Vagina (tissue), 2 donors: ENCODE measurements at regions of chr5 and their contacts with region 1.

Region 1: GRCh38 chr5:134527146-134527960 is 1.9 kb downstream of the JADE2 start:
- DNase-seq: peak in 1 of 2 donors; percentile 97
- H3K4me3 ChIP-seq: peak overlapping the region; percentile 77 to 82
- H3K27ac ChIP-seq: peak overlapping the region; percentile 96
- H3K4me1 ChIP-seq: peaks cover 59% of the 10 kb centered on the region
- H3K27me3 ChIP-seq: no peaks in the 10 kb centered on the region
- CTCF ChIP-seq: peak; percentile 68 to 81 (median 77)
- POLR2A ChIP-seq: peak in 1 of 2 donors; percentile 65

Region 2: DNA sequence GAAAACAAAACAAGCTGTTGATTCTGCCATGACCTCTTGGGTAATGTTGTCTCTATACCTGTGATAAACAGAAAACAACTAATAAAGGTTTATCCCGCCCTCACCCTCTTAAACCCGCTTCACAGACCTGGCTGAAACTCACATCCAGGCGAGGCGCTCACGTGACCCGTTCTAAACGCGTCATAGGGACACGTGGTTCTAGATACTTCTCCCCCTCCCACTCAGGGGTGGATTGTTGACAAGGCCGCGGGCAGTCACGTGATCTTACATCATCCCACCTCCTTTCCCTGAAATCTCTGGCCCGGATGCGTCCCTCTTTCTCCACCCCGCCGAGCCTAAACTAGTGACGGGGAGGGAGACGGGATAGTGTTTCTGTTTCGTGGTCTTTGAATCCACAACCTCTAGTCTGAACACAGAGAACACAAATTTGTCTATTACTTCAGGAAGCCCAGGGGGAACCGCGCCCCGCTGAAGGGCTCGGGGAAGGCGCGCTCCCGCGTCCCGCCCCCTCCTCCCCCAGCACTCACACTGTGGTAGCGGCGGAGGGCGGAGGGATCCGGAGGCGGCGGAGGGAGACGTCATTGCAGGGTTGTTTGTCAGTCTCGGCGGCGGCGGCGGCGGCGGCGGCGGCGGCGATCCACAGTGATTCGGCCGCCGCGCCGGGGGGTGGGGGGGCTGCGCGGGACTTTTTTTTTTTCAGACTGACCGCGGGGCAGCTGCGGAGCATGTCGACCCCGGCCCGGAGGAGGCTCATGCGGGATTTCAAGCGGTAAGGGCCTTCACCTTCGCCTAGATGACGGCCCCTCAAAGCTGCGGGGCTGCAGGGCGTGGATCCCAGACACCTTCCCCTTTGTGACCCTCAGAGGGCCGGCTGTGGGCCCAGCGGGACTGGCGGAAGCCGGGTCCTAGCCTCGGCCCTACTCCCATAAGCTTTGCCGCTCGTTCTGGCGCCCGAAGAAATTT is 156.2 kb before region 1 on chr5 and contains the start of gene UBE2B:
- intact Hi-C with region 1: loop called (anchors 1 kb)
- DNase-seq: peak; percentile 99 to 100
- H3K4me3 ChIP-seq: peak within 1 kb of the TSS; percentile 76 to 81
- H3K27ac ChIP-seq: peak within 1 kb of the TSS; percentile 99
- H3K4me1 ChIP-seq: peaks cover 38% of the 10 kb centered on the region
- H3K27me3 ChIP-seq: no peaks in the 10 kb centered on the region
- CTCF ChIP-seq: peak in 1 of 3 experiments; percentile 17
- POLR2A ChIP-seq: peak in 1 of 2 donors; percentile 82
- total RNA-seq, gene UBE2B: 68.3 TPM

Region 3: DNA sequence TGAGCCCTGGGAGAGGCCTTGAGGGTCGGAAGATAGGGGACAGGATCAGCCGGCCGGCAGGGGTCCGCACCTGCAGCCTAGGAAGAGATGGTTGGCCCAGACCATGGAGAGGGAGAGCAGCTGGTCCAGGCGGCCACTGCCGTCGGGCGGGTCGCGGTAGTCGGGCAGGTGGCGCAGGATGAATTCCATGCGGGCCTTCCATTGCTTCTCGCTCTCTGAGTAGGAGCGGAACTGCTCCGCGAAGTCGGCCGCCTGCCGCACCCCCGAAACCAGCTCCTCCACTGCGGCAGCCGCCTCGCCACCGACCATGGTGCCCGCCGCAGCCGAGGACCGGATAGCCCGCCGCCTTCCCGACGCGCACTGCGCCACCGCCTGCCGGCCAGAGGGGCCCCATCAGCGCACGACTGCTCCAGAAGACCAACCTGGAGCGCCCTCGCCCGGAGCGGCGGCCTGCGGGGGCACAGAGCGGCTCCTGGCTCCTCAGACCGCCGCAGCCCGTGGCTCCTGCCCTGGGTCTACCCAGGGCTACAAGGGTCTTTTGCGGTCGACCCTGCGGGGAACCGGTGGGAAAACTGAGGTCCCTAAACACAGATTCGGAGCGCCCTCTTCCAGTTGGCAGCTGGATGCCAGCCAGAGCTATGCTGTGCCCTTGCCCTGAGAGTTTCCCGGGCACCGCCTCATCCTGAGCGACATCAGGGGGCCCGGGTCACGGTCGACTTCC is 115.6 kb before region 1 on chr5 and contains the start of gene CDKN2AIPNL:
- intact Hi-C with region 1: loop called (anchors 2 kb)
- DNase-seq: peak in 1 of 2 donors; percentile 89
- H3K4me3 ChIP-seq: peak within 1 kb of the TSS; percentile 79 to 87
- H3K27ac ChIP-seq: peak within 1 kb of the TSS; percentile 85
- H3K4me1 ChIP-seq: peaks cover 35% of the 10 kb centered on the region
- H3K27me3 ChIP-seq: no peaks in the 10 kb centered on the region
- CTCF ChIP-seq: peak; percentile 24 to 100 (median 80)
- POLR2A ChIP-seq: no peak
- total RNA-seq, gene CDKN2AIPNL: 18.4 TPM

Region 4: DNA sequence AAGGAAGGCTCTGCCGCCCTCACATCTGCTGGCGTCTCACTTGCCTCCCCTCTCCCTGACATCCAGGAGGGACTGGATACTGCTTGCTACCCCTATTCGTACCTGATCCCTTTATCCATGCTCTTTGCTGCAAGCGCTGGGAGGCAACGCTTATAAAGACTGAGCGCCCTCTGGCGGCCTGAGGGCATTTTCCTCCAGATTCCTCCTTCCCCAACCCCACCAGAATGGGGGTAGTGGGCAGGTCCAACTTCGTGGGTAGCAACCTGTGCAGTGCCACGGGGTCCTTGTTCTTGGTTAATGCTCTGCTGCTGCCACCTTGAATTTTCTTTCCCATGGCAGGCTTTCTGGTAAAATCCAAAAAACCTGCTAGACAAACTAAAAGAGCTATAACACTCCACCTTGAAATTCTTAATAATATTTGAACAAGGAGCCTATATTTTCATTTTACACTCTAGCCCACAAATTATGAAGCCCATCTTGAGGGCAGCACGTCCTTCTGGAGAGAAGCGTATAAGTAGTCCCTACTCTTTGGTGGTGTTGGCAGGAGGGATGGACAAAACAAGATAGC is 50.5 kb after region 1 on chr5:
- intact Hi-C with region 1: loop called (anchors 5 kb)
- DNase-seq: no peak
- H3K4me3 ChIP-seq: no peak overlapping the region
- H3K27ac ChIP-seq: no peak overlapping the region
- H3K4me1 ChIP-seq: peaks cover 28% of the 10 kb centered on the region
- H3K27me3 ChIP-seq: no peaks in the 10 kb centered on the region
- CTCF ChIP-seq: peak; percentile 62 to 80 (median 76)
- POLR2A ChIP-seq: no peak